Gastrocnemius medialis (tissue), 4 donors: ENCODE measurements at regions of chr11 and their contacts with region 1.

Region 1: GRCh38 chr11:43643898-43644620 is 36.5 kb upstream of the HSD17B12 start:
- DNase-seq: peak; percentile 74 to 81
- ATAC-seq: peak; percentile 99
- H3K4me3 ChIP-seq: peak overlapping the region; percentile 90 to 97 (median 94)
- H3K27ac ChIP-seq: peak overlapping the region; percentile 85 to 89 (median 88)
- H3K4me1 ChIP-seq: peaks cover 17 to 25% of the 10 kb centered on the region in 2 donors
- H3K27me3 ChIP-seq: peaks cover 14 to 23% (median 20%) of the 10 kb centered on the region in 3 donors
- CTCF ChIP-seq: no peak
- POLR2A ChIP-seq: peak in 1 of 2 donors; percentile 18

Region 2: DNA sequence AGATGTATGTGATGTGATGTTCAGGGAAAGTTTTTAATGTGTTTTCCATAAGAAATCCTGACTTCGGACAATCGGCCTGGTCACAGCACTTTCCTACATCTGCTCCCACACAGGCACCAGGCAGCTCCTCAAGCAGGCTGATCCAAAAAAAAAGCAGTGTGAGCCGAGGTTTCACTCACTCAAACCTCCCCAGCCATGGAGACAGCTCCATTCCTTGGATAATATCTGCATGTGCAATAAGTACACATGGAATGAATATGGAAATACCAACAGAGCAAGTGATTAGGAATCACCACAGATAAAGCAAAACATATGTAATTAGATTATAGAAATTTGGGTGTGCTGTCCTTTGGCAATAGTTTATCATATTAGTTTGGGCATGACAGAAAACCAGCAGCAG is 421.0 kb before region 1 on chr11:
- in situ Hi-C with region 1: no loop called
- intact Hi-C with region 1: no loop called
- DNase-seq: no peak
- ATAC-seq: no peak
- H3K4me3 ChIP-seq: no peak overlapping the region
- H3K27ac ChIP-seq: no peak overlapping the region
- H3K4me1 ChIP-seq: no peaks in the 10 kb centered on the region
- H3K27me3 ChIP-seq: no peaks in the 10 kb centered on the region
- CTCF ChIP-seq: no peak
- POLR2A ChIP-seq: no peak

Region 3: GRCh38 chr11:43680521-43681400 is 36.7 kb after region 1 on chr11 and contains the start of gene HSD17B12:
- in situ Hi-C with region 1: no loop called
- intact Hi-C with region 1: loop called (anchors 1 kb)
- DNase-seq: peak; percentile 98
- ATAC-seq: peak; percentile 99
- H3K4me3 ChIP-seq: peak within 1 kb of the TSS; percentile 73 to 97 (median 94)
- H3K27ac ChIP-seq: peak within 1 kb of the TSS; percentile 87 to 94 (median 92)
- H3K4me1 ChIP-seq: peaks cover 29 to 34% of the 10 kb centered on the region in 2 donors
- H3K27me3 ChIP-seq: no peaks in the 10 kb centered on the region
- CTCF ChIP-seq: no peak
- POLR2A ChIP-seq: peak; percentile 71 to 91
- total RNA-seq, gene HSD17B12: 20.5 to 41.1 (median 28.6) TPM

Region 4: GRCh38 chr11:43830928-43831440 is 186.9 kb after region 1 on chr11:
- in situ Hi-C with region 1: no loop called
- intact Hi-C with region 1: loop called (anchors 10 kb)
- DNase-seq: peak; percentile 32 to 48
- ATAC-seq: peak; percentile 98 to 99
- H3K4me3 ChIP-seq: no peak overlapping the region
- H3K27ac ChIP-seq: peak overlapping the region; percentile 65 to 75 (median 74)
- H3K4me1 ChIP-seq: peaks cover 35 to 43% of the 10 kb centered on the region in 2 donors
- H3K27me3 ChIP-seq: no peaks in the 10 kb centered on the region
- CTCF ChIP-seq: no peak
- POLR2A ChIP-seq: no peak

Region 5: DNA sequence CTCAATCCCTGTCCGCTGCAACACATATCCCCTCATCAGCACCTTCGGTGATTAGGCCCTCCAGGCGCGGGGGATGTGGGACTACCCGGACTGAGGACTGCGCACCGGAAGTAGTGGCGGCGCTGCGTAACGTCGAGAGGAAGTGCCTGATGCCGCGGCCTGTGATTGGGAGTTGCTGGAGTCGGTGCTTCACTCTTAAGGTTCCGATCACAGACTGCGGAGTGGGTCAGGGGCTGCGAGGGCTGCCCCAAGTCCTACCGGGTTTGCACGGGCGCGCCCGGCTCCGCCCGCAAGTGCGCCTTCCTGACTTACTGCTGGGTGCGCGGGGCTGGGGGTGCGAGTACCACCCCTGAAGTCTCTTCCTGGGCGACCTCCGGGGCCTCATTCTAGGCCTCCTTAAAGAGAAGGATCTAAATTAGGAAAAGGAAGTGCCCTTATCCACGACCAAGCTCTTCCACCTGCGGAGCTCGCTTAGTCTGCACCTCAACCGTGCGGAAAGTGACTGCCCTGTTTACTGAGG is 236.6 kb after region 1 on chr11 and contains the start of gene ALKBH3:
- in situ Hi-C with region 1: no loop called
- intact Hi-C with region 1: loop called (anchors 10 kb)
- DNase-seq: peak; percentile 89 to 90
- ATAC-seq: peak; percentile 99
- H3K4me3 ChIP-seq: peak within 1 kb of the TSS; percentile 70 to 97 (median 92)
- H3K27ac ChIP-seq: peak within 1 kb of the TSS; percentile 66 to 84 (median 70)
- H3K4me1 ChIP-seq: peaks cover 18 to 21% of the 10 kb centered on the region in 2 donors
- H3K27me3 ChIP-seq: peaks cover 0 to 3% (median 0%) of the 10 kb centered on the region in 3 donors
- CTCF ChIP-seq: peak in 2 of 5 experiments; percentile 16
- POLR2A ChIP-seq: peak; percentile 19 to 26
- total RNA-seq, gene ALKBH3: 27.5 to 44.1 (median 42.0) TPM